ENCODE measurements at regions of chr18 and their contacts with region 1.

Region 1: DNA sequence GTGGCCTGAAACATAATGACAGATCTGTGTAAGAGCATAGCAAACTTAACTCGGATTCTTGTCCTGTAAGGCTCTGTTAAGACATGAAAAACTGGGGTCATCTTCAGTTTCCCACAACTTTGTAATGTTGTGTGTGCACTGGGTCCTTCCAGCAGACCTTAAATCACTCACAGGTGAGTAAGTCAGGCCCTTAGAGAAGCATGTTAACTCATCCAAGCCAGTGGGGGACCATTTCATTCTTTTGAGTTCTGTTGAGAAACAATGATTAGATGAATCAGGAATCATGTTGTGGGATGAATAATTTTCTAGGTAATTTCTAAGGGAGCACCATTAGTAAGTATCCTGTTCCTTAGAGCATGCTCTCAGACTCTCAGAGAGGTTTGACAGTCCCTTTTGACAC is 167.1 kb downstream of the ESCO1 start:
- DNase-seq: no peak
- H3K4me3 ChIP-seq: no peak overlapping the region
- H3K27ac ChIP-seq: no peak overlapping the region
- H3K4me1 ChIP-seq: no peaks in the 10 kb centered on the region
- H3K27me3 ChIP-seq: no peaks in the 10 kb centered on the region
- CTCF ChIP-seq: no peak
- EP300 ChIP-seq: no peak
- POLR2A ChIP-seq: no peak

Region 2: GRCh38 chr18:21361307-21361880 is 72.0 kb before region 1 on chr18:
- intact Hi-C with region 1: loop called (anchors 10 kb)
- DNase-seq: no peak
- H3K4me3 ChIP-seq: no peak overlapping the region
- H3K27ac ChIP-seq: no peak overlapping the region
- H3K4me1 ChIP-seq: no peaks in the 10 kb centered on the region
- H3K27me3 ChIP-seq: no peaks in the 10 kb centered on the region
- CTCF ChIP-seq: no peak
- EP300 ChIP-seq: no peak
- POLR2A ChIP-seq: no peak

Region 3: GRCh38 chr18:21638822-21639221 is 205.4 kb after region 1 on chr18:
- intact Hi-C with region 1: no loop called
- DNase-seq: no peak
- H3K4me3 ChIP-seq: no peak overlapping the region
- H3K27ac ChIP-seq: no peak overlapping the region
- H3K4me1 ChIP-seq: no peaks in the 10 kb centered on the region
- H3K27me3 ChIP-seq: no peaks in the 10 kb centered on the region
- CTCF ChIP-seq: no peak
- EP300 ChIP-seq: no peak
- POLR2A ChIP-seq: no peak

Region 4: DNA sequence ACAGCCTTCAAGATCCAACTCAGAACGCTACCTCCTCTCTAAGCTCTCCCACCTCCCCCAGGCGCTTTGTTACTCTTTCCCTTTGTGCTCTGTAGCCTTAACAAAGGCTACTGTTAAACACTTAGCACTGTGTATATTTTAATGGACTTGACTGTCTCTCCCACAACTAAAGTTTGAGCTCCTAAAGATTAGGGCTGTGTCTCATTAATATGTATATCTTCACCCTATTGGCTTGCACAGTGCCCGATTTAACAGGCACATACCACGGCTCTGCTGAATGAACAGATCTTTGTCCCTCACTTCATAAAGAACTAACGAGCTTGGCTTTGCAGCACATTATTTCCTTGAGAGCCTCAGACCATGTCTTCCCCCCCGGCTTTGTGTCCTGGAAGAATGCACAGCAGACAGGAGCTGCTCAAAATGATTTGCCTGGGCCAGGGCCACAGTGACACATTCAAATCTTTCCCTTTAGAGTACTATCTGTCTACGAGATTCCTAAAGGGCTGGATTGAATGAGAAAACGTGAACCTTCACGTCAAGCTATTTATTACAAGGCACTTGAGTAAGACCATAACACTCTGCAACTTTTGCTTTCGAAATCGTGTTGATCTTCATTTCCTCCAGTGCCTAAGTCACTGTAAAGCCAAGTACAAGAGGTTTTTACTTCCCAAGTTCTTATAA is 249.1 kb after region 1 on chr18:
- intact Hi-C with region 1: no loop called
- DNase-seq: no peak
- H3K4me3 ChIP-seq: peak overlapping the region; percentile 22 to 51 (median 44)
- H3K27ac ChIP-seq: peak overlapping the region; percentile 23 to 74 (median 72)
- H3K4me1 ChIP-seq: peaks cover 0 to 18% (median 14%) of the 10 kb centered on the region in 4 donors
- H3K27me3 ChIP-seq: no peaks in the 10 kb centered on the region
- CTCF ChIP-seq: no peak
- EP300 ChIP-seq: no peak
- POLR2A ChIP-seq: no peak

Measured in sigmoid colon (tissue), 7 donors.